ENCODE measurements at regions of chr6 and their contacts with region 1.

Region 1: GRCh38 chr6:37029249-37029971 is 24.0 kb downstream of the FGD2 start:
- DNase-seq: peak; percentile 69 to 87 (median 82)
- ATAC-seq: peak; percentile 84 to 96 (median 95)
- H3K4me3 ChIP-seq: no peak overlapping the region
- H3K27ac ChIP-seq: peak overlapping the region in 1 of 12 donors; percentile 47
- H3K4me1 ChIP-seq: peaks cover 0 to 21% (median 0%) of the 10 kb centered on the region in 12 donors
- H3K27me3 ChIP-seq: no peaks in the 10 kb centered on the region
- CTCF ChIP-seq: peak; percentile 65 to 89 (median 78)
- POLR2A ChIP-seq: peak in 1 of 2 donors; percentile 16

Region 2: GRCh38 chr6:37115236-37115895 is 86.0 kb after region 1 on chr6:
- intact Hi-C with region 1: loop called in 1 of 10 experiments (anchors 5 kb)
- DNase-seq: no peak
- ATAC-seq: peak in 1 of 4 donors; percentile 31
- H3K4me3 ChIP-seq: no peak overlapping the region
- H3K27ac ChIP-seq: no peak overlapping the region
- H3K4me1 ChIP-seq: no peaks in the 10 kb centered on the region
- H3K27me3 ChIP-seq: no peaks in the 10 kb centered on the region
- CTCF ChIP-seq: no peak
- POLR2A ChIP-seq: no peak

Region 3: DNA sequence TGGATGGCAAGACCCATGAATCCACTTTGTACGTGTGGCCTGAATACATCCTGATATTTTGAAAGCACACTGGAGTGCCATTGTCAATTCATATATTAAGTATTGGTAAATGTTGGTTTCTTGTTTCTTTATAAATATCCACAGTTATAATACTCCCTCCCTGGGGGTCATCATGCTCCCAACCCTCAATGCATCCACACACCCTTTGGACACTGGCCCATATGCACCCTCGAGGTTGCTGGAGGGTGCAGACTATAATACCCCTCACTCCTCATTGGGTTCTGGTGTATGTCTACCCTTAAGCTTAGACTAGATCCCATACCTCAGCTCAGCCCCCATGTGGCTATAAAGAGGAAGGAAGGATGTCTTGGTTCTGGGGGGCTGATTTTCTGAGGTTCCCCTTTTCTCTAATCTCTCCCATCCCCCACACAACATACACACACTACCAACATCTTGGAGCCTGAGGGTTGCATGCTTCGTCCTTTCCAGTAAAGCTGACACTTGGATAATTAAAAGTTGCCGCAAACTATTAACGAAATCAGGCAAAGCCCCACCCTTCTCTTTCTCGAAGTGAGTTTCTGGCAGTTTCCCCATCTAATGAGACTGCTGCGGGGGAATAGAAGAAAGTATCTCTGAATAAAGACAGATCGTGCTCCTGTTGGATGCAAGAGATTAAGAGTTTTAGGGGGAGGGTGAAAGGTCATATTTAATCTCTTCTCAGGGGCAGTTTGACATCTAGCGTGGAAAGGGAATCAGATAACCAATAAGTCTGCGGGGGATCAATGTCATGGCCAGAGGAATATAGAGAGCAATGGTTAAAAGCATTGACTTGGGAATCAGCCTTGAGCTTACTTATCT is 147.9 kb after region 1 on chr6:
- intact Hi-C with region 1: loop called in 8 of 10 experiments (anchors 1 to 10 kb)
- DNase-seq: no peak
- ATAC-seq: peak in 2 of 4 donors; percentile 26 to 55
- H3K4me3 ChIP-seq: no peak overlapping the region
- H3K27ac ChIP-seq: peak overlapping the region in 1 of 12 donors; percentile 97
- H3K4me1 ChIP-seq: peaks cover 0 to 85% (median 5%) of the 10 kb centered on the region in 12 donors
- H3K27me3 ChIP-seq: no peaks in the 10 kb centered on the region
- CTCF ChIP-seq: no peak
- POLR2A ChIP-seq: no peak